PC-3 (cell line): ENCODE measurements at regions of chr5 and their contacts with region 1.

Region 1: DNA sequence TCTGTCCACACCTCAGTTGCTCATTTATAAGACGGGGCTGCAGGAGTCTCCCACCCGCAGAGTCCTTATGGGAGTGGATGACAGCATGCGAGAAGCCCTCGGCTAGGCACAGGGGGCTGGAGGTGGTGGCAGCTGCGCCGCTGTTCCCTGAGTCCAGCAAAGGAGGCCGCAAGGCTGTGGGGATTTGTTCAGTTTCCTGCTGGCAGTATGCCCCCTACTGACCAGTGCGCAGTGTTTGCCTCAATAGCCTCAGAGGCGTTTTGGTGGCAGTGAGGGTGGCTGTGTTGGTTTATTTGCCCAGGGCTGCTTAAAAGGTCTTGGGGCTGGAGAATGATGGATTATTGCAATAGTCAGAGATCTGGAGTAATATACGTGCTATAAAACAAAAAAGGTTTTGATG is 176.3 kb upstream of the OTULINL start:
- DNase-seq: peak; percentile 72
- ATAC-seq: peak; percentile 58
- H3K4me3 ChIP-seq: peak overlapping the region; percentile 35
- H3K27ac ChIP-seq: peak overlapping the region; percentile 90
- H3K4me1 ChIP-seq: peaks cover 42% of the 10 kb centered on the region
- H3K27me3 ChIP-seq: no peaks in the 10 kb centered on the region
- CTCF ChIP-seq: peak; percentile 83

Region 2: GRCh38 chr5:14447958-14448911 is 43.0 kb after region 1 on chr5:
- CTCF ChIA-PET with region 1: no interaction called
- POLR2A ChIA-PET with region 1: no interaction called
- intact Hi-C with region 1: loop called (anchors 5 kb)
- DNase-seq: no peak
- ATAC-seq: no peak
- H3K4me3 ChIP-seq: no peak overlapping the region
- H3K27ac ChIP-seq: peak overlapping the region; percentile 63
- H3K4me1 ChIP-seq: peaks cover 45% of the 10 kb centered on the region
- H3K27me3 ChIP-seq: no peaks in the 10 kb centered on the region
- CTCF ChIP-seq: no peak

Region 3: GRCh38 chr5:14463629-14464028 is 58.4 kb after region 1 on chr5:
- CTCF ChIA-PET with region 1: no interaction called
- POLR2A ChIA-PET with region 1: no interaction called
- intact Hi-C with region 1: loop called (anchors 1 kb)
- DNase-seq: peak; percentile 89
- ATAC-seq: peak; percentile 93
- H3K4me3 ChIP-seq: no peak overlapping the region
- H3K27ac ChIP-seq: peak overlapping the region; percentile 90
- H3K4me1 ChIP-seq: peaks cover 39% of the 10 kb centered on the region
- H3K27me3 ChIP-seq: no peaks in the 10 kb centered on the region
- CTCF ChIP-seq: no peak

Region 4: DNA sequence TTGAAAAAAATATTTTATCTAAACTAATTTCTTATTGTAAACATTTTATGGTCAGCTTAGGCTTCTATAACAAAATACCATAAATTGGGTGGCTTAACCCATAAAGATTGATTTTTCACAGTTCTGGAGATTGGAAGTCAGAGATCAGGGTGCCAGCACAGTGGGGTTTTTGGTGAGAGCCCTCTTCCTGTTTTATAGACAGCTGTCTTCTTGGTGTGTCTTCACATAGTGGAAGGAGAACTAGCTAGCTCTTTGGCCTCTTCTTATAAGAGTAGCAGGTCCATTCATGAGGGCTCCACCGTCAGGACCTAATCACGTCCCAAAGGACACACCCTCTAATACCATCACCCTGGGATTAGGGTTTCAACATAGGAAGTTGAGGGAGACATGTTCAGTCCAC is 202.9 kb after region 1 on chr5:
- CTCF ChIA-PET with region 1: no interaction called
- POLR2A ChIA-PET with region 1: no interaction called
- intact Hi-C with region 1: no loop called
- DNase-seq: no peak
- ATAC-seq: no peak
- H3K4me3 ChIP-seq: no peak overlapping the region
- H3K27ac ChIP-seq: no peak overlapping the region
- H3K4me1 ChIP-seq: no peaks in the 10 kb centered on the region
- H3K27me3 ChIP-seq: no peaks in the 10 kb centered on the region
- CTCF ChIP-seq: no peak

Region 5: GRCh38 chr5:14628346-14628745 is 223.1 kb after region 1 on chr5:
- CTCF ChIA-PET with region 1: no interaction called
- POLR2A ChIA-PET with region 1: no interaction called
- intact Hi-C with region 1: loop called (anchors 5 kb)
- DNase-seq: peak; percentile 72
- ATAC-seq: peak; percentile 42
- H3K4me3 ChIP-seq: no peak overlapping the region
- H3K27ac ChIP-seq: no peak overlapping the region
- H3K4me1 ChIP-seq: peaks cover 16% of the 10 kb centered on the region
- H3K27me3 ChIP-seq: no peaks in the 10 kb centered on the region
- CTCF ChIP-seq: no peak

Region 6: DNA sequence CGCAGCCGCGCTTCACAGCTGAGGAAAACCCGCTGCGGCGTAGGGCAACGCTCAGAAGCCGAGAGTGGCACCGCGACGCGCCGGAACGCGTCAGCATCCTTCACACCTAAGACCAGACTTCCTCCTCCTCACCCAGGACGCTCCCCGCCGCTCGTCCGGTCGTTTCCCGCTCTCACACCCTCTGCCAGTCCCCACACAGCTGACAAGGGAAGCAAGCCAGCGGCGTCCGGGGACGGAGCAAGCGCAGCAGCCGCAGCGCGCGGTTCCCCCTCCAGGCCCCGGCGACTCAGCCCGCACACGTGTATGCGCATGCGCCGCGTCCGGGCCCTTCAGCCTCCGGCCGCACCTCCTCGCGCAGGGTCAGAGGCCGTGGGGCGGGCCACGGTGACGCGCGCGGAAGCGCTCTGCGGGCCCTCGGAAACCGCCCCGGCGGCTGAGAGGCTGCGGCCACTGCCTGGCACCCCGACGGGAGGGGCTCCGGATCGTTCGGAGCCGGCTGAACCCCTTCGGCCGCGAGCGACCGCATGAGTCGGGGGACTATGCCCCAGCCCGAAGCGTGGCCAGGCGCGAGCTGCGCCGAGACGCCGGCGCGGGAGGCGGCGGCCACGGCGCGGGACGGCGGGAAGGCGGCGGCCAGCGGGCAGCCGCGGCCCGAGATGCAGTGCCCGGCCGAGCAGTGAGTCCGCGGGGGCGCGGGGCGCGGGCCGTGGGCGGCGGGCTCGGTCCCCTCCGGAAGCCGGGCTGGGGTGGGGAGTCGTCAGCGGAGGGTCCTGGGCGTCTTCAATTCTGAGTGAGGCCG is 259.2 kb after region 1 on chr5 and contains the start of gene OTULIN:
- CTCF ChIA-PET with region 1: no interaction called
- POLR2A ChIA-PET with region 1: no interaction called
- intact Hi-C with region 1: loop called (anchors 5 kb)
- DNase-seq: peak; percentile 94
- ATAC-seq: peak; percentile 79
- H3K4me3 ChIP-seq: peak within 1 kb of the TSS; percentile 73
- H3K27ac ChIP-seq: peak within 1 kb of the TSS; percentile 55
- H3K4me1 ChIP-seq: peaks cover 50% of the 10 kb centered on the region
- H3K27me3 ChIP-seq: no peaks in the 10 kb centered on the region
- CTCF ChIP-seq: no peak
- total RNA-seq, gene OTULIN: 22.4 and 26.7 TPM in 2 replicates